Activated CD4-positive, alpha-beta T cell treated with anti-CD3 and anti-CD28 coated beads, Interleukin-2, amount 10 ng/mL, durations not matched to agents 24 days and 14 days (primary cell): ENCODE measurements at regions of chr14 and their contacts with region 1.

Region 1: GRCh38 chr14:106642090-106642489 is 1115.7 kb downstream of the TMEM121 start:
- DNase-seq: no peak
- H3K4me3 Mint-ChIP-seq: no peak overlapping the region
- H3K27ac Mint-ChIP-seq: no peak overlapping the region
- H3K4me1 Mint-ChIP-seq: peaks cover 2% of the 10 kb centered on the region
- H3K27me3 Mint-ChIP-seq: peaks cover 16% of the 10 kb centered on the region

Region 2: GRCh38 chr14:106625186-106625585 is 16.9 kb before region 1 on chr14:
- intact Hi-C with region 1: loop called (anchors 1 kb)
- DNase-seq: no peak
- H3K4me3 Mint-ChIP-seq: no peak overlapping the region
- H3K27ac Mint-ChIP-seq: no peak overlapping the region
- H3K4me1 Mint-ChIP-seq: peaks cover 10% of the 10 kb centered on the region
- H3K27me3 Mint-ChIP-seq: peaks cover 59% of the 10 kb centered on the region